H1 (cell line): ENCODE measurements at regions of chr15 and their contacts with region 1.

Region 1: DNA sequence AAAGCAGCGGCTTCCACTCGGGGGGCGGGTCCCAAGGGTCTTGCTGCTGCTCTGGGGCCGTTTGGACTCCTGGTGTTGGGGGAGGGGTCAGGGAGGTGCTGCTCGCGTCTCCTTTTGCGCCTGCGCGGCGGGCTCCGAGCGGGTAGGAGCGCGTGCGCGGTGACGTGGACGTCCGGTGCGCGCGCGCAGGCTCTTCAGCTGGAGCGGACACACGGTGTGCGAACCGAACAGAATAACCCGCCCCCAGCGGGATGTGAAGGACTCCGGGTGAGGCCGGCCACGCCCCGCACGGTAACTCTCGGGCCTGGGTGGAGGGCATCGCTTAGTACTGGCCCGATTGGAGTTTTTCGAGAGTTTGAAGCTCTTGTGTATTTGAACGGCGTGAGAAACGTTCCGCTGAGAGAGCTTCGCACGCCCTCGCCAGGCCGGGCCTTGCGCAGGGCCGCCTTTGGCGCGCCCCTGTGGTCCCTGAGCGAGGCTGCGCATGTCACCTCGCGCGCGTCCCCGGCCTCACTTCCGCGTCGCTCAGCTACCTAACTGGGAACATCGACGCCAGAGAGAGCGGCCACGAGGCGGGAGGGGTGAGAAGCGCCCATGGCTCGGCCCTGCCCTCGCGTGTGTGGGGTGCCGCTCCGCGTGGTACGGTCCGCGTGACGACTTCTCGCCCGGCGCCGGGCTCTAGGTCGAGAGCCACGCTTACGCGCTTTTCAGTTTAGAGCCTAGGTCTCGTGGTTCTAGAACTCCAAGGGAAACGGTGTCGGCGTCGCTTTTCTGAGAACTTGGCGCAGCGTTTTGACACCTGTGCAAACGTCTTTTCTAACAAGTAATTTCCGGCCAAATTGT is at the start of gene MGA:
- DNase-seq: peak; percentile 89 to 95
- H3K4me3 ChIP-seq: peak within 1 kb of the TSS; percentile 65 to 84 (median 69)
- H3K27ac ChIP-seq: peak within 1 kb of the TSS; percentile 38; the same call in 1 of the 2 replicates
- H3K4me1 ChIP-seq: peaks cover 0 to 3% (median under 1%) of the 10 kb centered on the region in 4 experiments; a peak in 2 of 7 replicates
- H3K27me3 ChIP-seq: peaks cover 0 to 12% (median 6%) of the 10 kb centered on the region in 4 experiments; a peak in 4 of 7 replicates
- CTCF ChIP-seq: peak in 2 of 3 experiments; percentile 11 to 19; a peak in 2 of 4 replicates
- EP300 ChIP-seq: no peak
- POLR2A ChIP-seq: 0 out of 3 replicates have a peak, but pooled peaks of 1 of the 2 experiments have one; percentile 65
- RAD21 ChIP-seq: peak; percentile 15 to 18; a peak in 2 of 4 replicates
- total RNA-seq, gene MGA: 53.2 and 55.7 TPM in 2 replicates

Region 2: DNA sequence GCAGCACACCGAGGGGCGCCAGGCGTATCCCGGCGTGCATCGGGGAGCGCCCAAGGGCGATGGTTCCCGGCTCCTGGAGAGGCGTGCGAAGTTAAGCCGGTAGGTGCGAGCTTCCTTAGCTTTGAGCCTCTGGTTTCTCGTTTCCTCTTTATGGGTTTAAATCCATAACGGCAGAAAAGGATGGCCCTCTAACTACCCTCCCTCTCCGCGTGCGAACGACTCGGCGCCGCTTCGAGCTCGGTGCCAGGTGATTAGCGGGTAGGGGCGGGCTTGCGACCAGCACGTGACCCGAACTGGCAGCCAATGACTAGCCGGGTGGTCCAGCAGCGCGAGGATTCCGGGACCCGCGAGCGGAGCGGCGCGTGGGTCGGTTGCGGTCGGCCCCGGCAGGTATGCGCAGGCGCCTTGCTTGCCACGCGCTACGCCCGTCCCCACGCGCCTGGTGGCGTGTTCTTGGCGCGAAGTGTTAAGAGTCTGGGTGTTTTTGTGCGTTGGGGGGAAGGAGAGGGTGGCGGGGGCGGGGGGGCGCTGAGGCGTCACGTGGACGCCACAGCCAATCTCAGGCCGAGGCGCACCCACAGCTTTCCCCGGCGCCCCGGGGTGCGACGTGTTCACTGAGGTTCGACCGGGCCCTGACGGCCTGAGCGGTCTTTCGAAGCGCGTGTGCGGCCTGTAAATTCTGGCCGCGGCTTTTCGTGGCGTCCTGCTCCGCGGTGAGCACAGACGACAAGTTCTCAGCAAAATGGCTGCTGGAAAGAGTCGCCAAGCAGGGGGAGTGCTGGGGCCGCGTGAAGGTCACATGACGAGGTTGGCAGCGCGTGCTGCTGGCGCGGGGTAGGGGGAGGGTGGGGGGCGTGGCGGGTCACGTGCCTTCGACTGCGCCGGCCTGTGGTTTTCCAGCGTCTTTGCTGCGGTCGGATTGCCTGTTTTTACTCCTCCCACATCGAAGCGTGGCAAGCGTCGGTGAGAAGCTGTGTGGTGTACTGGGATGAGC is 39.0 kb before region 1 on chr15:
- CTCF ChIA-PET with region 1: no interaction called
- POLR2A ChIA-PET with region 1: interaction called, 12 read pairs
- DNase-seq: peak; percentile 60 to 85
- H3K4me3 ChIP-seq: peak overlapping the region; percentile 16 to 61 (median 39)
- H3K27ac ChIP-seq: no peak overlapping the region
- H3K4me1 ChIP-seq: peaks cover 0 to 7% (median 4%) of the 10 kb centered on the region in 4 experiments; a peak in 4 of 7 replicates
- H3K27me3 ChIP-seq: peaks cover 0 to 6% (median 3%) of the 10 kb centered on the region in 4 experiments; a peak in 4 of 7 replicates
- CTCF ChIP-seq: no peak
- EP300 ChIP-seq: 0 out of 3 replicates have a peak, but pooled peaks of 1 of the 2 experiments have one; percentile 29
- POLR2A ChIP-seq: peak; percentile 50 to 52; a peak in 1 of 3 replicates
- RAD21 ChIP-seq: no peak